GM12878 (cell line): ENCODE measurements at regions of chr10 and their contacts with region 1.

Region 1: GRCh38 chr10:73529089-73529832 is 33.4 kb upstream of the PPP3CB start:
- DNase-seq: peak; percentile 20
- ATAC-seq: peak; percentile 100
- H3K4me3 ChIP-seq: no peak overlapping the region
- H3K27ac ChIP-seq: no peak overlapping the region
- H3K4me1 ChIP-seq: no peaks in the 10 kb centered on the region
- H3K27me3 ChIP-seq: no peaks in the 10 kb centered on the region
- CTCF ChIP-seq: peak; percentile 72 to 83 (median 79)
- EP300 ChIP-seq: no peak
- POLR2A ChIP-seq: no peak
- RAD21 ChIP-seq: peak; percentile 97

Region 2: DNA sequence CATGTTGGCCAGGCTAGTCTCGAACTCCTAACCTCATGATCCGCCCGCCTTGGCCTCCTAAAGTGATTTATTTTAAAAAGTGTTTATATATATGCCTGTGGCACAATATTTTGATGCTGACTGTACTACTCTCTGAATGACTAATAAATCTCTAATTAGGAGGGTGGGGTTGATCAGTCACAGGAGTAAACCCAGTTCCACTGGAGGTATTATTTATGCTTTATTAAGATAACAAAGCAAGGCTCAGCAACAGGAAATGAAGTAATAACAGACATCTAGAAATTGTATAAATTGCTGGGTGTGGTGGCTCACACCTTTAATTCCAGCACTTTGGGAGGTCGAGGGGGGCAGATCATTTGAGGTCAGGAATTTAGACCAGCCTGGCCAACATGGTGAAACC is 863.3 kb before region 1 on chr10:
- CTCF ChIA-PET with region 1: no interaction called
- POLR2A ChIA-PET with region 1: no interaction called
- RAD21 ChIA-PET with region 1: no interaction called
- SMC1A ChIA-PET with region 1: no interaction called
- in situ Hi-C with region 1: no loop called
- intact Hi-C with region 1: no loop called
- DNase-seq: no peak
- ATAC-seq: no peak
- H3K4me3 ChIP-seq: no peak overlapping the region
- H3K27ac ChIP-seq: no peak overlapping the region
- H3K4me1 ChIP-seq: no peaks in the 10 kb centered on the region
- H3K27me3 ChIP-seq: no peaks in the 10 kb centered on the region
- CTCF ChIP-seq: no peak
- EP300 ChIP-seq: no peak
- POLR2A ChIP-seq: no peak
- RAD21 ChIP-seq: no peak

Region 3: GRCh38 chr10:73136627-73137026 is 392.6 kb before region 1 on chr10:
- CTCF ChIA-PET with region 1: no interaction called
- POLR2A ChIA-PET with region 1: no interaction called
- RAD21 ChIA-PET with region 1: no interaction called
- SMC1A ChIA-PET with region 1: no interaction called
- in situ Hi-C with region 1: no loop called
- intact Hi-C with region 1: no loop called
- DNase-seq: no peak
- ATAC-seq: no peak
- H3K4me3 ChIP-seq: no peak overlapping the region
- H3K27ac ChIP-seq: no peak overlapping the region
- H3K4me1 ChIP-seq: peaks cover 4% of the 10 kb centered on the region; the same call in 1 of the 2 replicates
- H3K27me3 ChIP-seq: no peaks in the 10 kb centered on the region
- CTCF ChIP-seq: no peak
- EP300 ChIP-seq: no peak
- POLR2A ChIP-seq: no peak
- RAD21 ChIP-seq: no peak

Region 4: DNA sequence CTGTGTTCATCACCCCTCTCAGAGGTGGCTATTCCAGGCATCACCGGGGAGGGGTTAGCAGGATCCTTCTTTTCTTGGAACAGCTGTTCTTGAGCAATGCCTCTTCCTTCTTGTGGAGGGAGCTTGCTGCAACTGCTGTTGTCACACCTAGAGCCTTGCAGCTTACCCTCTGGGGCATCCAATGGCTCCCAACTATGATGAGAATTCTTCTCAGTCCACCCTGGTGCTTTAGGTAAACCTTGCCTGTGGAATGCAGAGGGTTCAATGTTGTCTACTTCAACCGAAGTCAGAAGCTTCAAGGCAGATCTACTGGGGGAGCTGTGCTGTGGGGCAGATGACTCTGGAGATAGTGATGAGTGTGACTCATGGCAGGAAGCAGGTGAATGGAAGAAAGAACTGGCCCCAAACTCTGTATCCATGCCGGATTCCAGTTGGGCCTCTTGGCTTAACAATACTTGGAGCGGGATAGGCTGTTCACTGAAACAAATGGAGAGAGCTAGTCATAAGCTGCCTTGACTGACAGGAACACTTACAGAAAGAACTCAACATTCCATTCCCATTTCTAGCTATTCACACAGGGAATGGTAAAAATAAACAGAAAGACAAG is 11.9 kb before region 1 on chr10:
- CTCF ChIA-PET with region 1: interaction called, 23 read pairs
- POLR2A ChIA-PET with region 1: no interaction called
- RAD21 ChIA-PET with region 1: interaction called, 3 read pairs
- SMC1A ChIA-PET with region 1: interaction called, 10 read pairs
- in situ Hi-C with region 1: no loop called
- intact Hi-C with region 1: no loop called
- DNase-seq: no peak
- ATAC-seq: no peak
- H3K4me3 ChIP-seq: no peak overlapping the region
- H3K27ac ChIP-seq: no peak overlapping the region
- H3K4me1 ChIP-seq: no peaks in the 10 kb centered on the region
- H3K27me3 ChIP-seq: no peaks in the 10 kb centered on the region
- CTCF ChIP-seq: no peak
- EP300 ChIP-seq: no peak
- POLR2A ChIP-seq: no peak
- RAD21 ChIP-seq: no peak

Region 5: DNA sequence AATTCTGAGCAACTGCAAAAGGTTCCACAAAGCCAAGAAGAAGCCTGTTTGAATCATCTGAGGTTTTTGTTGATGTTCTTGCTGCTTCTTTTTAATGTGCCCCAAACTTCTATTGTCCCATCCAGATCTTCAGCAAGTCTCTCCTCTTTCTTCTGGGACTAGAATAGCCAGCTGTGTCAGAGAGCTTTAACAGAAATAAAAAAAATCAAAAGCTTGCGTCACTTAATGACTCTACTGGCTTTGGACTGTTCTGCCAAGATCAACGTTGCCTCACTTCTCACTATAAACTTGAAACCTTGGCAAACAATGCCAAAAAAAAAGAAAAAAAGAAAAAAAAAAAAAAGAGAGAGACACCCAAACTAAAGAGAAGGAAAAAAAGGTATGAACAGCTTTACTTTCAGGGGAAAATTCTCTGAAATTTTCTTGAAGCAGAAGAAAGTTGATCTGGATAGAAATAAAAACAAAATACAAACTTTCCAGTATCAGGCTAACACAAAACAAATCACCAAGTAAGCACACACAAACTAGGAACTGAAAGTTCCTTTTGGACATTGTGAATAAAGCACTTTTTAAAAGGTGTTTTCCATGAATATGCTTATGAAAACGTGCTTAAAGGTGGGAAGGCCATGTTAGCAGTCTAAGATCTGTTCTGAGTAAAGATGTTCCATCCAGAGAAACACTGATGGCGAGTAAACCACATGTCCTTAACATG is 47.1 kb after region 1 on chr10:
- CTCF ChIA-PET with region 1: interaction called, 4 read pairs
- POLR2A ChIA-PET with region 1: no interaction called
- RAD21 ChIA-PET with region 1: interaction called, 3 read pairs
- SMC1A ChIA-PET with region 1: interaction called, 14 read pairs
- in situ Hi-C with region 1: no loop called
- intact Hi-C with region 1: no loop called
- DNase-seq: peak; percentile 17
- ATAC-seq: peak; percentile 68
- H3K4me3 ChIP-seq: no peak overlapping the region
- H3K27ac ChIP-seq: peak overlapping the region; percentile 48; the same call in 1 of the 2 replicates
- H3K4me1 ChIP-seq: no peaks in the 10 kb centered on the region; the same call in 1 of the 2 replicates
- H3K27me3 ChIP-seq: no peaks in the 10 kb centered on the region
- CTCF ChIP-seq: no peak
- EP300 ChIP-seq: peak in 1 of 2 experiments; percentile 49; a peak in 1 of 4 replicates
- POLR2A ChIP-seq: no peak
- RAD21 ChIP-seq: no peak

Region 6: GRCh38 chr10:73625884-73626752 is 96.9 kb after region 1 on chr10:
- CTCF ChIA-PET with region 1: interaction called, 11 read pairs
- POLR2A ChIA-PET with region 1: no interaction called
- RAD21 ChIA-PET with region 1: interaction called, 8 read pairs
- SMC1A ChIA-PET with region 1: interaction called, 13 read pairs
- in situ Hi-C with region 1: no loop called
- intact Hi-C with region 1: loop called (anchors 5 kb)
- DNase-seq: peak; percentile 98
- ATAC-seq: peak; percentile 98
- H3K4me3 ChIP-seq: peak overlapping the region; percentile 87
- H3K27ac ChIP-seq: peak overlapping the region; percentile 95
- H3K4me1 ChIP-seq: peaks cover 5% of the 10 kb centered on the region
- H3K27me3 ChIP-seq: no peaks in the 10 kb centered on the region
- CTCF ChIP-seq: no peak
- EP300 ChIP-seq: 0 out of 4 replicates have a peak, but pooled peaks of 1 of the 2 experiments have one; percentile 10
- POLR2A ChIP-seq: peak; percentile 95
- RAD21 ChIP-seq: no peak

Region 7: GRCh38 chr10:73650537-73651331 is 121.5 kb after region 1 on chr10:
- CTCF ChIA-PET with region 1: interaction called, 163 read pairs
- POLR2A ChIA-PET with region 1: interaction called, 4 read pairs
- RAD21 ChIA-PET with region 1: interaction called, 96 read pairs
- SMC1A ChIA-PET with region 1: interaction called, 23 read pairs
- in situ Hi-C with region 1: no loop called
- intact Hi-C with region 1: no loop called
- DNase-seq: peak; percentile 65
- ATAC-seq: peak; percentile 70
- H3K4me3 ChIP-seq: no peak overlapping the region
- H3K27ac ChIP-seq: peak overlapping the region; percentile 77
- H3K4me1 ChIP-seq: peaks cover 25% of the 10 kb centered on the region
- H3K27me3 ChIP-seq: no peaks in the 10 kb centered on the region
- CTCF ChIP-seq: no peak
- EP300 ChIP-seq: peak; percentile 26 to 45; a peak in 1 of 4 replicates
- POLR2A ChIP-seq: no peak
- RAD21 ChIP-seq: no peak